ENCODE measurements at regions of chr6 and their contacts with region 1.

Region 1: GRCh38 chr6:136289579-136290409 is at the start of gene BCLAF1:
- DNase-seq: peak; percentile 98 to 99
- H3K4me3 ChIP-seq: peak within 1 kb of the TSS; percentile 75
- H3K4me3 Mint-ChIP-seq: peak within 1 kb of the TSS; percentile 82
- H3K27ac Mint-ChIP-seq: peak within 1 kb of the TSS; percentile 99
- H3K4me1 ChIP-seq: peaks cover 4% of the 10 kb centered on the region; the same call in 1 of the 2 replicates
- H3K4me1 Mint-ChIP-seq: peaks cover 4% of the 10 kb centered on the region
- H3K27me3 ChIP-seq: no peaks in the 10 kb centered on the region
- H3K27me3 Mint-ChIP-seq: no peaks in the 10 kb centered on the region
- CTCF ChIP-seq: no peak
- total RNA-seq, gene BCLAF1: 178 and 182 TPM in 2 replicates

Region 2: DNA sequence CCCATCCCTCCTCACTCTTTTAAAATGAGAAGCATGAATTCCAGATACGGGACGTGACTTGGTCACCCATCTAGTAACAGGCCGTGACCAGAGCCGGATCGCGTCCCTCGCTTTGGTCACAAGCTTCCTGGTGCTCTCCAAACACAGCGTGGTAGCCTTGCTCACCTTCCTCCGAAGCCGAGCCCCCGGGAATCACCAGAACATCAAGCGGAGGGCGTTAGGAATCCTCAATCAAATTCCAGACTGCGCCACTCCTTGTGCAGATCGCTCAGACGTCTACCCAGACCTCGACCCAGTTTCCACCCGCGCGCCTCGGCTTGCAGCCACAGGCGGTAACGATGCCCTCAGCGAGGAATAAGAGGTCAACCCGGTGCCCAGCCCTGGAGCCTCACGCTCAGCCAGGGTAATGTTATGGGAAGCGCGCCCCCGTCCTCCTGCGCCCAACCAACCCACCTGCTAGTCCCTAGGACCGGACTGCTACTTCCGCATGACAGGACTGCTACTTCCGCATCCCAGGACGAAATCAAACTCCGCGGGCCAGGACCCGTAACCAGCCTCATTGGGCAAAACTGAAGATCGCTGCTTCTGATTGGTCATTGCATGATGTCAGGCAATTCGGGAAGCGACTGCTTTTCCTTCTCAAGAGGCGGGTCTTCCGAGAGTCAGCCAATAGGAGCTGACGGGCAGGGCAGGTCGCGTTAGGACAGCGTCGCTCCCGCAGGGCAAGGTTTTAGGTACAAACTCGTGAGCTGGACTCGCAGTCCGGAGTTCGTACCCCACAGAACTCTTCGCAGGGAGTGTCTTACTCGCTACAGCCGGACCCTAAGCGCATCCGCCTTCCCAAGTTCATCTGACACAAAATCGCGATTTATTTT is 39.7 kb before region 1 on chr6 and contains the start of gene MTFR2:
- CTCF ChIA-PET with region 1: interaction called, 5 read pairs
- POLR2A ChIA-PET with region 1: interaction called, 64 read pairs
- intact Hi-C with region 1: loop called (anchors 1 kb)
- DNase-seq: peak; percentile 97 to 99
- H3K4me3 ChIP-seq: peak within 1 kb of the TSS; percentile 71
- H3K4me3 Mint-ChIP-seq: peak within 1 kb of the TSS; percentile 97
- H3K27ac Mint-ChIP-seq: peak within 1 kb of the TSS; percentile 98
- H3K4me1 ChIP-seq: peaks cover 9% of the 10 kb centered on the region; the same call in 1 of the 2 replicates
- H3K4me1 Mint-ChIP-seq: peaks cover 23% of the 10 kb centered on the region
- H3K27me3 ChIP-seq: no peaks in the 10 kb centered on the region
- H3K27me3 Mint-ChIP-seq: no peaks in the 10 kb centered on the region
- CTCF ChIP-seq: no peak
- total RNA-seq, gene MTFR2: 15.1 and 18.5 TPM in 2 replicates

Region 3: GRCh38 chr6:136317021-136317694 is 27.4 kb after region 1 on chr6:
- CTCF ChIA-PET with region 1: interaction called, 11 read pairs
- POLR2A ChIA-PET with region 1: interaction called, 5 read pairs
- intact Hi-C with region 1: loop called (anchors 1 kb)
- DNase-seq: peak; percentile 52 to 71
- H3K4me3 ChIP-seq: no peak overlapping the region
- H3K4me3 Mint-ChIP-seq: no peak overlapping the region
- H3K27ac Mint-ChIP-seq: no peak overlapping the region
- H3K4me1 ChIP-seq: no peaks in the 10 kb centered on the region
- H3K4me1 Mint-ChIP-seq: no peaks in the 10 kb centered on the region
- H3K27me3 ChIP-seq: no peaks in the 10 kb centered on the region
- H3K27me3 Mint-ChIP-seq: no peaks in the 10 kb centered on the region
- CTCF ChIP-seq: peak; percentile 75 to 79

Region 4: GRCh38 chr6:136323431-136324112 is 33.8 kb after region 1 on chr6:
- CTCF ChIA-PET with region 1: interaction called, 11 read pairs
- POLR2A ChIA-PET with region 1: no interaction called
- intact Hi-C with region 1: no loop called
- DNase-seq: no peak
- H3K4me3 ChIP-seq: no peak overlapping the region
- H3K4me3 Mint-ChIP-seq: no peak overlapping the region
- H3K27ac Mint-ChIP-seq: no peak overlapping the region
- H3K4me1 ChIP-seq: no peaks in the 10 kb centered on the region
- H3K4me1 Mint-ChIP-seq: no peaks in the 10 kb centered on the region
- H3K27me3 ChIP-seq: no peaks in the 10 kb centered on the region
- H3K27me3 Mint-ChIP-seq: peaks cover 3% of the 10 kb centered on the region
- CTCF ChIP-seq: no peak

Region 5: GRCh38 chr6:136532030-136532429 is 242.2 kb after region 1 on chr6:
- CTCF ChIA-PET with region 1: no interaction called
- POLR2A ChIA-PET with region 1: no interaction called
- intact Hi-C with region 1: no loop called
- DNase-seq: no peak
- H3K4me3 ChIP-seq: no peak overlapping the region
- H3K4me3 Mint-ChIP-seq: no peak overlapping the region
- H3K27ac Mint-ChIP-seq: no peak overlapping the region
- H3K4me1 ChIP-seq: no peaks in the 10 kb centered on the region
- H3K4me1 Mint-ChIP-seq: peaks cover 9% of the 10 kb centered on the region
- H3K27me3 ChIP-seq: no peaks in the 10 kb centered on the region
- H3K27me3 Mint-ChIP-seq: no peaks in the 10 kb centered on the region
- CTCF ChIP-seq: no peak

Measured in Caco-2 (cell line).